ENCODE measurements at regions of chr3 and their contacts with region 1.

Region 1: GRCh38 chr3:196081791-196082618 is at the start of gene TFRC:
- DNase-seq: peak; percentile 99
- ATAC-seq: peak; percentile 94
- H3K4me3 Mint-ChIP-seq: peak within 1 kb of the TSS; percentile 99
- H3K27ac Mint-ChIP-seq: peak within 1 kb of the TSS; percentile 91
- H3K4me1 Mint-ChIP-seq: peaks cover 47% of the 10 kb centered on the region
- H3K27me3 Mint-ChIP-seq: no peaks in the 10 kb centered on the region
- CTCF ChIP-seq: no peak
- total RNA-seq, gene TFRC: 238 and 290 TPM in 2 replicates

Region 2: GRCh38 chr3:196115678-196116083 is 33.7 kb after region 1 on chr3:
- CTCF ChIA-PET with region 1: no interaction called
- POLR2A ChIA-PET with region 1: interaction called, 5 read pairs
- intact Hi-C with region 1: loop called (anchors 1 kb)
- DNase-seq: no peak
- ATAC-seq: peak; percentile 65
- H3K4me3 Mint-ChIP-seq: no peak overlapping the region
- H3K27ac Mint-ChIP-seq: no peak overlapping the region
- H3K4me1 Mint-ChIP-seq: peaks cover 49% of the 10 kb centered on the region
- H3K27me3 Mint-ChIP-seq: no peaks in the 10 kb centered on the region
- CTCF ChIP-seq: no peak

Region 3: GRCh38 chr3:196179380-196180308 is 97.6 kb after region 1 on chr3:
- CTCF ChIA-PET with region 1: interaction called, 6 read pairs
- POLR2A ChIA-PET with region 1: interaction called, 44 read pairs
- intact Hi-C with region 1: loop called (anchors 1 kb)
- DNase-seq: peak; percentile 73
- ATAC-seq: peak; percentile 80
- H3K4me3 Mint-ChIP-seq: peak overlapping the region; percentile 66
- H3K27ac Mint-ChIP-seq: peak overlapping the region; percentile 97
- H3K4me1 Mint-ChIP-seq: peaks cover 48% of the 10 kb centered on the region
- H3K27me3 Mint-ChIP-seq: no peaks in the 10 kb centered on the region
- CTCF ChIP-seq: no peak

Region 4: DNA sequence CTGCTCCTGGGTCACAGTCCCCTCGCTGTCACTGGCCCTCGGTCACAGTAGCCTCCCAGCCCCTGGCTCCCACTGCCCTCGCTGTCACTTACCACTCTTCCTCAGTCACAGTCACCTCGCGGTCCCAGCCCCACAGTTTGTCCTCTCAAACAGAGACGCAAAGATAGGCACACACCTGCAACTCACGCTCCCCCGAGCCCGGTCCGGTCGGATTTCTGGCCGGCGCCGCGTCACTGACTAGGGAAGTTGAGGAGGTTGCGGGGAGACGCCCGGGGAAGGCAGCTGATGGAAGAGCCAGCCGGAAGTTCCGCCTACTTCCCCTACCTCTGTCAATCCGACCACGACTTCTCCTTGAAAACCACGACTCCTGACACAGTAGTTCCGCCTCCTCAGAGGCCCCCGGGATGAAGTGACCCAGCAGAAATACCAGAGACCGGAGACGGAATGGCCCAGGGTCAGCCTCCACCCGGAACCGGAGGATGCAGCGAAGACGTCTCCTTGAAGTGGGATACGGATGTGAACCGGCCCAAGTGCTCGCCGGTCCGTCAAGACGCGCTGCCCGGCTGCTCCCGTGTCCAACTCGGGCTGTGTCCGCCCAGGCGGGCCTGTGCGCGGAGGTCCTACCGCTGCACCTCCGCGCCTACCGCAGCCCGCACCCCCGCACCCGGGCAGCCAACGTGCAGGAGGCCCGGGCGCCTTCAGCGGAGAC is 205.6 kb after region 1 on chr3 and contains the start of gene PCYT1A:
- CTCF ChIA-PET with region 1: no interaction called
- POLR2A ChIA-PET with region 1: no interaction called
- intact Hi-C with region 1: loop called (anchors 1 kb)
- DNase-seq: peak; percentile 68
- ATAC-seq: peak; percentile 78
- H3K4me3 Mint-ChIP-seq: peak within 1 kb of the TSS; percentile 98
- H3K27ac Mint-ChIP-seq: peak within 1 kb of the TSS; percentile 97
- H3K4me1 Mint-ChIP-seq: peaks cover 66% of the 10 kb centered on the region
- H3K27me3 Mint-ChIP-seq: no peaks in the 10 kb centered on the region
- CTCF ChIP-seq: no peak
- total RNA-seq, gene PCYT1A: 54.6 and 58.8 TPM in 2 replicates

Region 5: DNA sequence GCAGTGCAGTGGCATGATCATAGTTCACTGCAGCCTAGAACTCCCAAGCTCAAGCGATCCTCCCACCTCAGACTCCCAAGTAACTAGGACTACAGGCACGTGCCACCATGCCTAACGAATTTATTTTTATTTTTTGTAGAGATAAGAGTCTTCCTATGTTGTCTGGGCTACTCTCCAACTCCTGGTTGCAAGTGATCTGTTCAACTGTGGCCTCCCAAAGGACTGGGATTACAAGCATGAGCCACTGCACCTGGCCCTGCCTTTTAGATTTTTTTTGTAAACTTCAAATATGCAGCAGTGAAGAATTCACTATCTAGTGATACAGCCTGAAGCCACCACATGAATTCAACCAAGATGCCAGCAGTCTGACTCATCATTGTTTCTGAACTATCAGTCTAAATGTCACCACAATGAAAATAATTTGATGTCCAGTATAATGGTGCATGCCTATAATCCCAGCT is 317.5 kb after region 1 on chr3:
- CTCF ChIA-PET with region 1: no interaction called
- POLR2A ChIA-PET with region 1: no interaction called
- intact Hi-C with region 1: no loop called
- DNase-seq: no peak
- ATAC-seq: no peak
- H3K4me3 Mint-ChIP-seq: no peak overlapping the region
- H3K27ac Mint-ChIP-seq: no peak overlapping the region
- H3K4me1 Mint-ChIP-seq: no peaks in the 10 kb centered on the region
- H3K27me3 Mint-ChIP-seq: no peaks in the 10 kb centered on the region
- CTCF ChIP-seq: no peak

Measured in activated B cell treated with CpG ODN at 0.5 μM for 24 hours (primary cell).